Caco-2 (cell line): ENCODE measurements at regions of chr11 and their contacts with region 1.

Region 1: GRCh38 chr11:78045851-78046485 is 17.7 kb upstream of the THRSP start:
- DNase-seq: peak; percentile 80 to 97
- H3K4me3 ChIP-seq: peak overlapping the region; percentile 28
- H3K4me3 Mint-ChIP-seq: peak overlapping the region; percentile 75
- H3K27ac Mint-ChIP-seq: peak overlapping the region; percentile 1
- H3K4me1 ChIP-seq: peaks cover 15% of the 10 kb centered on the region
- H3K4me1 Mint-ChIP-seq: peaks cover 23% of the 10 kb centered on the region
- H3K27me3 ChIP-seq: no peaks in the 10 kb centered on the region
- H3K27me3 Mint-ChIP-seq: no peaks in the 10 kb centered on the region
- CTCF ChIP-seq: peak; percentile 99

Region 2: DNA sequence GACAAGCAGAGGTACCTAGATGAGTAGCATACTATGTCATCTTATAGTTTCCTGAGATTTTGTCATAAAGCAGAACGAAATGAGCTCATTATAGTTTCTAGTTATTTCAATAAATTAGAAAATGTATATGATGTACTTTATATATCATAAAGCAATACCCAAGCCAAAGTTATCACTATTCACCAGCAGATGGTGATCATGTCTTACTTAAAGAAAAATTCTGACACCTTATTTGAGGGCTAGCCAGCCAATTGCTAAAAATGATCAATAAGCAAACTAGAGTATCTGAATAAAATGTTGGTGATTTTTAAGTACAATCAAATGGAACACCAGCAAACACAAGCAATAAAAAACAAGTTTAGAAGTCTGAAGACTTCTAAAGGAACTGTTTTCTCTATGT is 269.5 kb before region 1 on chr11:
- CTCF ChIA-PET with region 1: interaction called, 5 read pairs
- POLR2A ChIA-PET with region 1: no interaction called
- intact Hi-C with region 1: loop called (anchors 1 kb)
- DNase-seq: peak in 1 of 2 experiments; percentile 46
- H3K4me3 ChIP-seq: no peak overlapping the region
- H3K4me3 Mint-ChIP-seq: no peak overlapping the region
- H3K27ac Mint-ChIP-seq: no peak overlapping the region
- H3K4me1 ChIP-seq: peaks cover 21% of the 10 kb centered on the region
- H3K4me1 Mint-ChIP-seq: peaks cover 34% of the 10 kb centered on the region
- H3K27me3 ChIP-seq: no peaks in the 10 kb centered on the region
- H3K27me3 Mint-ChIP-seq: no peaks in the 10 kb centered on the region
- CTCF ChIP-seq: peak; percentile 49 to 73

Region 3: DNA sequence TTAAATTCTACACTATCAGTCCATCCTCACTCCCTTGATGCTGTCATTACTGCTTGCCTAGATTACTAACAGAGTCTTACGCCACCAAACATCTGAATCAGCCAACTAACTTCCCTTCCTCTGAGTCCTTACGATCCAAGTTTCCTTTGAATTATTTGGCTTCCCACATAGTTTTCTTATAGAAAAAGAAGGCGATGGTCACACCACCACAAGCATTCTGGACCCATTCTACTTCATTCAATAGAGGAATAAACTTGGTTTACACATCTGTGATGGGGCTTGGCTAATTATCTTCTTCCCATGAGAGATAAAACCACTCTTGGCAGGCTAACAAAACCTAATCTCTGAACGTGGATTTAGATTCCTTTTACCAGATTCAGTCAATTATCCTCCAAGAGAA is 86.5 kb before region 1 on chr11:
- CTCF ChIA-PET with region 1: no interaction called
- POLR2A ChIA-PET with region 1: no interaction called
- intact Hi-C with region 1: loop called (anchors 5 kb)
- DNase-seq: no peak
- H3K4me3 ChIP-seq: no peak overlapping the region
- H3K4me3 Mint-ChIP-seq: peak overlapping the region; percentile 25
- H3K27ac Mint-ChIP-seq: peak overlapping the region; percentile 58
- H3K4me1 ChIP-seq: peaks cover 24% of the 10 kb centered on the region
- H3K4me1 Mint-ChIP-seq: peaks cover 24% of the 10 kb centered on the region
- H3K27me3 ChIP-seq: no peaks in the 10 kb centered on the region
- H3K27me3 Mint-ChIP-seq: no peaks in the 10 kb centered on the region
- CTCF ChIP-seq: no peak

Region 4: GRCh38 chr11:78019821-78020220 is 26.1 kb before region 1 on chr11:
- CTCF ChIA-PET with region 1: interaction called, 14 read pairs
- POLR2A ChIA-PET with region 1: no interaction called
- intact Hi-C with region 1: loop called (anchors 2 kb)
- DNase-seq: no peak
- H3K4me3 ChIP-seq: no peak overlapping the region
- H3K4me3 Mint-ChIP-seq: no peak overlapping the region
- H3K27ac Mint-ChIP-seq: peak overlapping the region; percentile 6
- H3K4me1 ChIP-seq: peaks cover 20% of the 10 kb centered on the region; the same call in 1 of the 2 replicates
- H3K4me1 Mint-ChIP-seq: peaks cover 14% of the 10 kb centered on the region
- H3K27me3 ChIP-seq: no peaks in the 10 kb centered on the region
- H3K27me3 Mint-ChIP-seq: no peaks in the 10 kb centered on the region
- CTCF ChIP-seq: no peak

Region 5: GRCh38 chr11:78079232-78080083 is 33.5 kb after region 1 on chr11 and contains the start of gene NDUFC2:
- CTCF ChIA-PET with region 1: interaction called, 13 read pairs
- POLR2A ChIA-PET with region 1: interaction called, 6 read pairs
- intact Hi-C with region 1: no loop called
- DNase-seq: peak; percentile 87
- H3K4me3 ChIP-seq: peak within 1 kb of the TSS; percentile 73
- H3K4me3 Mint-ChIP-seq: peak within 1 kb of the TSS; percentile 76
- H3K27ac Mint-ChIP-seq: peak within 1 kb of the TSS; percentile 52
- H3K4me1 ChIP-seq: peaks cover 49% of the 10 kb centered on the region
- H3K4me1 Mint-ChIP-seq: peaks cover 37% of the 10 kb centered on the region
- H3K27me3 ChIP-seq: no peaks in the 10 kb centered on the region
- H3K27me3 Mint-ChIP-seq: no peaks in the 10 kb centered on the region
- CTCF ChIP-seq: no peak
- total RNA-seq, gene NDUFC2: 732 and 805 TPM in 2 replicates